HepG2 (cell line): ENCODE measurements at regions of chr17 and their contacts with region 1.

Region 1: GRCh38 chr17:72110231-72110944 is 10.4 kb upstream of the SOX9 start:
- DNase-seq: no peak
- ATAC-seq: no peak
- H3K4me3 ChIP-seq: no peak overlapping the region
- H3K27ac ChIP-seq: no peak overlapping the region
- H3K4me1 ChIP-seq: peaks cover 44% of the 10 kb centered on the region
- H3K27me3 ChIP-seq: no peaks in the 10 kb centered on the region
- CTCF ChIP-seq: no peak
- EP300 ChIP-seq: no peak
- POLR2A ChIP-seq: no peak
- RAD21 ChIP-seq: no peak

Region 2: DNA sequence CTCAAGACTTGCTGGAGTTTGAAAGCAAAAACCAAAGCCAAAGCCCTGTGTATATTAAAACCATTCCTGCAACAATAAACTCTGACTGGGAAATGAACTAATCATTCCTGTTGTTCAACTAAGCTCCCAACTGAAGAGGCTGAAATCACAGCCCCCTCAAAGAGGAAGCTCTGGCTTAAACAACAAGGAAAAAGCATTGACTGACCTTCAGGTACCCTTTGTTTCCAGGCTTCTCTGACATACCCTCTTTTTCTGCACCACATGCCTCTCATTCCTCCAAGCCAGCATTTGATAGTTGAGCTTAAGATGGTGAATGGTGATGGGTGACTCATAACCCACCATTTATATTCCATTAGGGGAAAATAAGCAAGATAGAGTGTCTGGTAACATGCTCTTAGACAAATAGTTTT is 460.4 kb before region 1 on chr17:
- CTCF ChIA-PET with region 1: no interaction called
- POLR2A ChIA-PET with region 1: no interaction called
- in situ Hi-C with region 1: no loop called
- intact Hi-C with region 1: no loop called
- DNase-seq: no peak
- ATAC-seq: no peak
- H3K4me3 ChIP-seq: no peak overlapping the region
- H3K27ac ChIP-seq: no peak overlapping the region
- H3K4me1 ChIP-seq: no peaks in the 10 kb centered on the region
- H3K27me3 ChIP-seq: no peaks in the 10 kb centered on the region
- CTCF ChIP-seq: no peak
- EP300 ChIP-seq: no peak
- POLR2A ChIP-seq: no peak
- RAD21 ChIP-seq: no peak

Region 3: DNA sequence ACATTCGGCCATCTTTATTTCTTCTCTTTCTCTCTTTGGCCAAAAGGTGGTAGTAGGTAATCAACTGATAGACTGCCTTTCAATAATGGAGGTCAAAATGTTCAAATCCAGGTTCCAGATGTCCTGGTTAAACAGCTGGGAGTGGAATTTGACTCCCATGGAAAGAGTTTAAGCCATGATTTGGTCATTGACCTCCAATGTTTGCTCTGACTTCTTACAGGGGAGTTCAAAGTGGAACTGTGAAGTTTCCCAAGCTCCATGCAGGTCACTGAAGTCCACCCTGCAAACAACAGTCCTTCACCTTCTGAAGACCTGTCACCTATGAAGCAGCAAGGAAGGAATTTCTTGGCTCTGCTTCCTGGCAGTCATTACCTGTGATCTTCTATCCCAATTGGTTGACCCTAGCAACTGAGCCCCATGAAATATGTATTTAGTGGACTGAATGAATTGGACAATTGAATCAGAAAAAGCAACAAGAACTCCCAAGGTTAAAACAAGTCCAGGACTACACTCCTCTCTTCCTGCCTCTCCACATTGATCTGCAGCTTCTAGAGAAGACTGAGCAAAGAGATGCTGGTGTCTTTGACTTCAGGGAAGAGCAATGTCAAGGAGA is 17.6 kb before region 1 on chr17:
- CTCF ChIA-PET with region 1: no interaction called
- POLR2A ChIA-PET with region 1: interaction called, 3 read pairs
- in situ Hi-C with region 1: no loop called
- intact Hi-C with region 1: loop called (anchors 2 kb)
- DNase-seq: peak; percentile 98
- ATAC-seq: peak; percentile 96
- H3K4me3 ChIP-seq: no peak overlapping the region
- H3K27ac ChIP-seq: peak overlapping the region; percentile 61
- H3K4me1 ChIP-seq: peaks cover 33% of the 10 kb centered on the region
- H3K27me3 ChIP-seq: no peaks in the 10 kb centered on the region
- CTCF ChIP-seq: peak; percentile 74
- EP300 ChIP-seq: peak; percentile 88 to 97; a peak in 3 of 4 replicates
- POLR2A ChIP-seq: no peak
- RAD21 ChIP-seq: peak; percentile 61; the same call in 1 of the 2 replicates

Region 4: GRCh38 chr17:72158895-72159885 is 48.8 kb after region 1 on chr17:
- CTCF ChIA-PET with region 1: no interaction called
- POLR2A ChIA-PET with region 1: no interaction called
- in situ Hi-C with region 1: no loop called
- intact Hi-C with region 1: no loop called
- DNase-seq: peak; percentile 23
- ATAC-seq: no peak
- H3K4me3 ChIP-seq: no peak overlapping the region
- H3K27ac ChIP-seq: no peak overlapping the region
- H3K4me1 ChIP-seq: peaks cover 17% of the 10 kb centered on the region
- H3K27me3 ChIP-seq: peaks cover 0 to 16% of the 10 kb centered on the region in 2 experiments; a peak in 3 of 5 replicates
- CTCF ChIP-seq: no peak
- EP300 ChIP-seq: no peak
- POLR2A ChIP-seq: no peak
- RAD21 ChIP-seq: no peak